ENCODE measurements at regions of chr14 and their contacts with region 1.

Region 1: DNA sequence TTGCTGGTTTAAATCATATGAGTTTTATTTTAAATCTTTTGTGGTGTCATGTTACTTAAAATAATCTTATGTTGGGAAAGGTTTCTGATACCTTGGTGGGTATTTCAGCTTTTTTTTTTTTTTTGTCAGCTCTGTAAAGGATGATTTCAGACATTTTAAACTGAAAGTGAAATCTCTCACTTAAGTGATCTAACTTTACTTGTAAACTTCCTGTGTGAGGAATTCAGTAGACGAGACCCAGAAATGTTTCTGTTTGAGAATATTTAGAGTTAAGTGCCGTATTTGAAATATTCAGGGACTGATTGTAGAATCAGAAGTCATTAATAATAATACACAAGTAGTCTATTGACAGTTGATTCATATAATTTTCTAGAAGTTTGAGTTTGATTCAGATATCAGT is 37.8 kb downstream of the PROX2 start:
- DNase-seq: peak in 1 of 35 experiments; percentile 64
- ATAC-seq: peak; percentile 55 to 74 (median 63)
- H3K4me3 ChIP-seq: no peak overlapping the region
- H3K4me3 Mint-ChIP-seq: peak overlapping the region; percentile 67 to 74 (median 70)
- H3K27ac ChIP-seq: peak overlapping the region; percentile 96
- H3K27ac Mint-ChIP-seq: peak overlapping the region; percentile 98 to 99
- H3K4me1 ChIP-seq: peaks cover 39 to 53% of the 10 kb centered on the region in 2 experiments
- H3K4me1 Mint-ChIP-seq: peaks cover 78 to 85% (median 85%) of the 10 kb centered on the region in 3 donors
- H3K27me3 ChIP-seq: no peaks in the 10 kb centered on the region
- H3K27me3 Mint-ChIP-seq: no peaks in the 10 kb centered on the region

Region 2: GRCh38 chr14:74217672-74218448 is 620.3 kb before region 1 on chr14:
- CTCF ChIA-PET with region 1: no interaction called
- POLR2A ChIA-PET with region 1: no interaction called
- DNase-seq: peak; percentile 31 to 77 (median 63)
- ATAC-seq: peak; percentile 91 to 96 (median 92)
- H3K4me3 ChIP-seq: peak overlapping the region; percentile 16 to 50
- H3K4me3 Mint-ChIP-seq: peak overlapping the region; percentile 21 to 41 (median 28)
- H3K27ac ChIP-seq: no peak overlapping the region
- H3K27ac Mint-ChIP-seq: no peak overlapping the region
- H3K4me1 ChIP-seq: peaks cover 0 to 10% of the 10 kb centered on the region in 2 experiments
- H3K4me1 Mint-ChIP-seq: peaks cover 0 to 4% (median 4%) of the 10 kb centered on the region in 3 donors
- H3K27me3 ChIP-seq: peaks cover 0 to 50% of the 10 kb centered on the region in 2 experiments
- H3K27me3 Mint-ChIP-seq: peaks cover 13 to 26% of the 10 kb centered on the region in 2 donors

Region 3: DNA sequence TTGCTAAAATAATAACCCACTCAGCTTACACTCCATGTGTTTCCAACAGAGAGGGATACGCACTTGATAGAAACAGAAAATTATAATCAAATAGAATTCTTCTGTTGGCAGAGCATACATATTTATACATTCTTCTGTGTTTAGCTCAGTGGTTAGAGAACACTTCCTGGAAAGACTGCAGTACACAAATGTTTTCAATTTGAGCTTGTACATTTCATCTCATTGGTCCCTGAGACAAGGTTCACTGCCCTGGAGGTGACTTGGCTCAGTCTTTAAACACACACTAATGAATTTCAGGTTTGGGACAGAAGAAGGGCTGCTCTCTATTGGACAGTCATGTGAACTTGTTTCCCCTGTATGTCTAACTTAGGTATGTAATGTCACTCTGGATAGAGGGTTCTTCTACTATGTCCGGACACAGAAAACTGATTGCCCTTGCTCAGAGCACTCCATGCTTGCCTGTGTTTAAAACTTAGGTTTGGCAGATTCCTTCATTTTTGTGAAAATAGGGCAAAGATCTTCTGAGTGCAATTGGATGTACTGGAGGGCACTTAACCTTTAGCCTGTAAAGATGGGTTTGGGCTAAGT is 14.9 kb after region 1 on chr14:
- CTCF ChIA-PET with region 1: interaction called, 3 to 10 read pairs
- POLR2A ChIA-PET with region 1: interaction called in 1 of 2 experiments, 11 read pairs
- DNase-seq: no peak
- ATAC-seq: peak; percentile 37 to 51 (median 50)
- H3K4me3 ChIP-seq: no peak overlapping the region
- H3K4me3 Mint-ChIP-seq: peak overlapping the region in 1 of 3 donors; percentile 10
- H3K27ac ChIP-seq: no peak overlapping the region
- H3K27ac Mint-ChIP-seq: peak overlapping the region; percentile 19 to 58
- H3K4me1 ChIP-seq: peaks cover 11% of the 10 kb centered on the region in 2 experiments
- H3K4me1 Mint-ChIP-seq: peaks cover 26 to 37% (median 27%) of the 10 kb centered on the region in 3 donors
- H3K27me3 ChIP-seq: no peaks in the 10 kb centered on the region
- H3K27me3 Mint-ChIP-seq: no peaks in the 10 kb centered on the region